ENCODE measurements at regions of chr22 and their contacts with region 1.

Region 1: GRCh38 chr22:35840302-35840739 is 122.6 kb downstream of the APOL5 start:
- DNase-seq: peak; percentile 96
- H3K4me3 ChIP-seq: peak overlapping the region; percentile 73
- H3K27ac ChIP-seq: peak overlapping the region; percentile 48
- H3K27me3 ChIP-seq: no peaks in the 10 kb centered on the region
- CTCF ChIP-seq: no peak

Region 2: GRCh38 chr22:35866651-35867050 is 26.3 kb after region 1 on chr22:
- CTCF ChIA-PET with region 1: no interaction called
- POLR2A ChIA-PET with region 1: interaction called, 11 read pairs
- DNase-seq: no peak
- H3K4me3 ChIP-seq: no peak overlapping the region
- H3K27ac ChIP-seq: no peak overlapping the region
- H3K27me3 ChIP-seq: no peaks in the 10 kb centered on the region
- CTCF ChIP-seq: no peak

Measured in AG04450 (cell line).